GM10248 (cell line): ENCODE measurements at regions of chr12 and their contacts with region 1.

Region 1: GRCh38 chr12:32545423-32545980 is 133.6 kb upstream of the DNM1L start:
- DNase-seq: no peak
- CTCF ChIP-seq: no peak

Region 2: DNA sequence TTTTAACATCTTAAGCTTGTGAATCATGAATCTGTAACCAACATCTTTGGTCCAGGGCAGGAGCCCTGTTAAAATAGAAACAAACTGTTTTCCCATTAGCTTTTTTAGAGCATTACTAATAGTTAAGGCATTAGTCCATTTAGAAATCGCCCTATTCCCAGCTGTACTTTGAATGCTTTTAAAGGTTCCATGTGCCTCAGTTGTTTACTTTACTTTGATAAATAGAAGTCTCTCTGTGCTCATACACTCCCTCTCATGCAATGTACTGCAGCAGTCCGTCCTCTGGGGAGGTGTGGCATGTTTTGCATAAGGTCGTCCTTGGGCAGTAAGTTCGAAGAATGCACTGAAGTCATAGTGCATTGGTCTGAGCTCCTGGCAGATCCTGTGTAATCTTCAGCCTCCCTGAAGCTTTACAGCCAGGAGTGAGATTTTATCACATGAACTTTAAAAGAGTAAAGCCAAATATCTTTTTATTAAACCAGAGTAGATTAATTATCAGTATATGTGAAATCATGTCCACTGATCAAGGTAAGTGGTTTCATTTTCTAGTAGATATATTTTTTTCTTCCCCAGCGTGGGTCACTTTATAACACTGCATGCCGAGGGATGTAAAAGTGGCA is 11.4 kb before region 1 on chr12:
- CTCF ChIA-PET with region 1: interaction called, 11 read pairs
- POLR2A ChIA-PET with region 1: no interaction called
- DNase-seq: peak; percentile 26
- CTCF ChIP-seq: no peak